ENCODE measurements at regions of chr15 and their contacts with region 1.

Region 1: DNA sequence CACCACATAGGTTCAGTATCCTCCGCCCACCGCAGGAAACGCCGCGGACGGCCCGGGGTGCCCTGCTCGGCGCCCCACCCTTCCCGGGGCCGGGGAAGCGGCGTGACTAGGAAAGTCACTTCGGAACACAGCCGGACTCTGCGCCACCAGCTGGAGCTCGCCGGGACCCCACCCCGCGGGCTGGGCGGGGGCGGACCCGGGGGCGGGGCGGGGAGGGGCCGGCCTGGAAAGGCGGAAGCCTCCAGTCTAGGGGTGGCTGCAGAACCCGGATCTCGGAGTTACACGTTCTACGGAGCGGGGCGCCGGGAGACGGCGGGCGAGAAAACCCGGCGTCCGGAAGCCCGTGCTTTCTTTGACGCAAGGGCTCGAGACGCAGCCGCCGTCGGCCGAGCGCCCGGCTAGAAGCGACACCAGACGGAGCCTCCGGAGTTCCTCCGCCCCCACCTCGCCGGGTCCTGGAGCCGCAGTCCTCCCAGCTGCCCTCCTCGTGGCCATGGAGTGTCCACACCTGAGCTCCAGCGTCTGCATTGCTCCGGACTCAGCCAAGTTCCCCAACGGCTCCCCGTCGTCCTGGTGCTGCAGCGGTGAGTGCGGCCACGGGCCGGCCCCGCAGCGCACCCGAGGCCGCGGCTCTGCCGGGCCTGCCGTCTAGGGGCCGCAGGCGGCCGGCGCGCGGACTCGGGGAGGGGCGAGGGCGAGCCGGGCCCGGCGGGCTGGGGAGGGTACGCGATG is at the start of gene USP3:
- DNase-seq: peak; percentile 93
- ATAC-seq: peak; percentile 69
- H3K4me3 Mint-ChIP-seq: peak within 1 kb of the TSS; percentile 96
- H3K27ac Mint-ChIP-seq: peak within 1 kb of the TSS; percentile 99
- H3K4me1 Mint-ChIP-seq: peaks cover 74% of the 10 kb centered on the region
- H3K27me3 Mint-ChIP-seq: no peaks in the 10 kb centered on the region
- CTCF ChIP-seq: peak; percentile 65
- total RNA-seq, gene USP3: 57.1 to 58.6 TPM

Region 2: DNA sequence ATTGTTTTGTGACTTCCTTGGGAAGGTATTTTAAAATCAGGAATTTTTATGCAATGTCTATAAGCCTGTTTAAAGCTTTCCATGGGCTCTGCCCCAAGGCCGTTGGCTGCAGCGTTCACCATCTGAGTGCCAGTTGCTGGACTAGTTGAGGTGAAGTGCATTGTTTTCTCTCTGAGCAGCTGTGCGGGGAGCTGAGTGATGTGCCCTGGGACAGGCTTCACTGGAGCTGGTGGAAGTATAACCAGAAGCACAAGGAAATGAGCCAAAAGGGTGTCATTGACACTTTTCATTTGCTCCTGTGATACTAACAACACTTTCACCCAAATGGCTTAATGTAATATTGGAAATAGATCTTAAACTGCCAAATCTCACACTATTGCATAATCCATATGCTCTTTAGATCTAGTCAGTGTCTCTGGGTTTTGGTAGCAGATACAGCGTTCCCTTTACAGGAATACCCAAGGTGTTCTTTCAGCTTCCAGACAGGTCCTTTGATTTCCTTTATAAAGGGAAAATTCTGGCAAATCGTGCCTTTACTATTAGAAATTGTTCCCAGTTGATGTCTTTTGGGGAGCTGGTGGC is 197.8 kb before region 1 on chr15:
- CTCF ChIA-PET with region 1: no interaction called
- POLR2A ChIA-PET with region 1: no interaction called
- intact Hi-C with region 1: no loop called
- DNase-seq: no peak
- ATAC-seq: no peak
- H3K4me3 Mint-ChIP-seq: no peak overlapping the region
- H3K27ac Mint-ChIP-seq: no peak overlapping the region
- H3K4me1 Mint-ChIP-seq: no peaks in the 10 kb centered on the region
- H3K27me3 Mint-ChIP-seq: no peaks in the 10 kb centered on the region
- CTCF ChIP-seq: no peak

Region 3: GRCh38 chr15:63481105-63481810 is 23.2 kb before region 1 on chr15:
- CTCF ChIA-PET with region 1: interaction called, 24 read pairs
- POLR2A ChIA-PET with region 1: interaction called, 34 read pairs
- intact Hi-C with region 1: no loop called
- DNase-seq: peak; percentile 50
- ATAC-seq: peak; percentile 63
- H3K4me3 Mint-ChIP-seq: no peak overlapping the region
- H3K27ac Mint-ChIP-seq: peak overlapping the region; percentile 65
- H3K4me1 Mint-ChIP-seq: peaks cover 68% of the 10 kb centered on the region
- H3K27me3 Mint-ChIP-seq: no peaks in the 10 kb centered on the region
- CTCF ChIP-seq: no peak

Region 4: GRCh38 chr15:63514531-63514943 is 10.1 kb after region 1 on chr15:
- CTCF ChIA-PET with region 1: interaction called, 8 read pairs
- POLR2A ChIA-PET with region 1: interaction called, 15 read pairs
- intact Hi-C with region 1: no loop called
- DNase-seq: no peak
- ATAC-seq: no peak
- H3K4me3 Mint-ChIP-seq: peak overlapping the region; percentile 45
- H3K27ac Mint-ChIP-seq: peak overlapping the region; percentile 84
- H3K4me1 Mint-ChIP-seq: peaks cover 91% of the 10 kb centered on the region
- H3K27me3 Mint-ChIP-seq: no peaks in the 10 kb centered on the region
- CTCF ChIP-seq: no peak

Region 5: DNA sequence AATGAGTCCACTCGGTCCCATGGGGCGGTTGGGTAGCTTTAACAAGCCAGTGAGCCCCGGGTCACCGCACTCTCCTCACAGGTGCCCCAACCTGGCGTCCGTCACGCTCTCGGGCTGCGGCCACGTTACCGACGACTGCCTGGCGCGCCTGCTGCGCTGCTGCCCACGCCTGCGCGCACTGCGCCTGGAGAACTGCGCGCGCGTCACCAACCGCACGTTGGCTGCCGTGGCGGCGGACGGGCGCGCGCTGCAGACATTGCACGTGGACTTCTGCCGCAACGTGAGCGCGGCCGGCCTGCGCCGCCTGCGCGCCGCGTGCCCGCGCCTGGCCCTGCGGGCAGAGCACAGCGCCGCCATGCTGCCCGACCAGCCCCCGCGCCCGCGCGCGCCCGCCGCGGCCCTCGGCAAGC is 96.2 kb after region 1 on chr15:
- CTCF ChIA-PET with region 1: interaction called, 19 read pairs
- POLR2A ChIA-PET with region 1: interaction called, 39 read pairs
- intact Hi-C with region 1: loop called (anchors 5 kb)
- DNase-seq: peak; percentile 93
- ATAC-seq: peak; percentile 76
- H3K4me3 Mint-ChIP-seq: peak overlapping the region; percentile 87
- H3K27ac Mint-ChIP-seq: peak overlapping the region; percentile 96
- H3K4me1 Mint-ChIP-seq: peaks cover 52% of the 10 kb centered on the region
- H3K27me3 Mint-ChIP-seq: no peaks in the 10 kb centered on the region
- CTCF ChIP-seq: no peak

Measured in activated CD8-positive, alpha-beta T cell treated with anti-CD3 and anti-CD28 coated beads for 36 hours (primary cell).